Activated T-helper 1 cell treated with anti-CD3 and anti-CD28 coated beads, Interleukin-12 subunit alpha, Interleukin-12 subunit beta, Interleukin-2, Interleukin-4 antibody, amounts not matched to agents 30 ng/mL and 10 ng/mL and 1 ng/mL, durations not matched to agents 14 hours and 24 hours and 36 hours (primary cell): ENCODE measurements at regions of chr3 and their contacts with region 1.

Region 1: GRCh38 chr3:30302027-30302426 is 304.4 kb upstream of the TGFBR2 start:
- DNase-seq: peak; percentile 12
- H3K4me3 Mint-ChIP-seq: no peak overlapping the region
- H3K27ac Mint-ChIP-seq: no peak overlapping the region
- H3K4me1 Mint-ChIP-seq: peaks cover 29% of the 10 kb centered on the region
- H3K27me3 Mint-ChIP-seq: no peaks in the 10 kb centered on the region

Region 2: GRCh38 chr3:30221619-30222018 is 80.4 kb before region 1 on chr3:
- intact Hi-C with region 1: loop called (anchors 5 kb)
- DNase-seq: no peak
- H3K4me3 Mint-ChIP-seq: no peak overlapping the region
- H3K27ac Mint-ChIP-seq: no peak overlapping the region
- H3K4me1 Mint-ChIP-seq: peaks cover 34% of the 10 kb centered on the region
- H3K27me3 Mint-ChIP-seq: peaks cover 3% of the 10 kb centered on the region

Region 3: GRCh38 chr3:30286007-30286669 is 15.9 kb before region 1 on chr3:
- intact Hi-C with region 1: loop called (anchors 1 kb)
- DNase-seq: no peak
- H3K4me3 Mint-ChIP-seq: no peak overlapping the region
- H3K27ac Mint-ChIP-seq: peak overlapping the region; percentile 3
- H3K4me1 Mint-ChIP-seq: peaks cover 57% of the 10 kb centered on the region
- H3K27me3 Mint-ChIP-seq: no peaks in the 10 kb centered on the region

Region 4: GRCh38 chr3:30353711-30354467 is 51.9 kb after region 1 on chr3:
- intact Hi-C with region 1: loop called (anchors 1 kb)
- DNase-seq: peak; percentile 70
- H3K4me3 Mint-ChIP-seq: peak overlapping the region; percentile 27
- H3K27ac Mint-ChIP-seq: peak overlapping the region; percentile 70
- H3K4me1 Mint-ChIP-seq: peaks cover 85% of the 10 kb centered on the region
- H3K27me3 Mint-ChIP-seq: peaks cover 14% of the 10 kb centered on the region

Region 5: DNA sequence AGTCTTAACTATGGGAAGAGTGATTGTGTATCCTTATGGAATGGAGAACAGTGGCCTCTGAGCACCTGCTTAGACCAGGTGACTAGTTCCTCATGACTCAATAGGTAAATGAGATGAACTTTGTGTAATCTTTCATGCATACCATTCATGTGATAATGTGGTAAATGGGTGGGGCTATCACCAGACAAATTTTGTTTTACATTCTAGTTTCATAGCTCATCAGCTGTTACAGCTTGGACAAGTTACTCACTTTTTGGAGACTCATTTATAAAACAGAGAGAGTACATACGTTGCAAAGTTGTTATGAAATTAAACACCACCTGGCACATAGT is 200.7 kb after region 1 on chr3:
- intact Hi-C with region 1: loop called (anchors 5 kb)
- DNase-seq: no peak
- H3K4me3 Mint-ChIP-seq: no peak overlapping the region
- H3K27ac Mint-ChIP-seq: no peak overlapping the region
- H3K4me1 Mint-ChIP-seq: peaks cover 35% of the 10 kb centered on the region
- H3K27me3 Mint-ChIP-seq: no peaks in the 10 kb centered on the region